HCT116 (cell line): ENCODE measurements at regions of chr17 and their contacts with region 1.

Region 1: DNA sequence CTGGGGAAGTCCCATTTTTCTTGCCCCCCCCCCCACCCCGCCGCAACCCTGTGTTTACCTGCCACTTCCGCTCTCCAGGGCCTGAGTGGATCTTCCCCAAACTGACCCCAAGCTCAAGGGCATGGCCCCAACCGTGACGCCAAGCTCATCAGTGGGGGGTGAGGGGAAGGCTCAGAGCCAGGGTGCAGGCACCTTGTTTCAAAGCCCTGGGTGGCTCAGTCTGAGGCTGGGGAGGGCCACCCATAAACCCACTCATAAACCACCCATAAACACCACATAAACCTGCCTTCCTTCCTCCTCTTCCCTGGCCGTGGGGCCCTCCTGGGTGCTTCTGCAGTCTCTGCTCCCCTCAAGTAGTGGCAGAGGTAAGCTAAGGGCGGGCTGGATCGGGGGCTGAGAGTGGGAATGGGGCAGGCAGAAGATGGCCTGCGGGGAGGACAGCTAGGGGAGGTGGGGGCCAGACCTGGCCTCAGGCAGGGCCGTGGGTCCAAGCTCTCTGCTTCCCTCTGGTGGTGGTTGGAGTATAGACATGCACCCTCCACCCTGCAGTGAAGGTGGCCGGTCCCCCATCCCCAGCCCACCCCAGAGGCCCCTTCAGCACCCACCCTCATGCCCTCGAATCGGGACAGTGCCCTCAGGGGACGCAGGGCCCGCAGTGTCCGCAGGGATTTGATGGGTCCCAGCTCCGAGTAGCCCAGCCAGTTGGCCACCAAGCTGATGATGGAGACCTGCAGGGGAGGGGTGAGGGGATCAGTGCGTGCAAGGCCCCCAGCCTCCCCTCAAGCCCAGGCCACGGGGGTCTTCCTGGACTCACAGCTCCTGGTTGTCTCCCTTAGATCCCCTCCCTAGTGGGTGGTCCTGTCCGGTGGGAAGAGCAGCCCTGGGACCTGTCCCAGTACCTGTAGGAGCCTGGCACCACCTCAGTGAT is 14.6 kb upstream of the CD79B start:
- DNase-seq: peak; percentile 22
- ATAC-seq: peak; percentile 86
- H3K4me3 ChIP-seq: no peak overlapping the region
- H3K27ac ChIP-seq: no peak overlapping the region
- H3K4me1 ChIP-seq: peaks cover 0 to 10% of the 10 kb centered on the region in 2 experiments; a peak in 1 of 4 replicates
- H3K27me3 ChIP-seq: no peaks in the 10 kb centered on the region
- CTCF ChIP-seq: peak; percentile 58 to 83 (median 83)
- POLR2A ChIP-seq: no peak
- RAD21 ChIP-seq: no peak; the same call in 1 of the 2 replicates

Region 2: GRCh38 chr17:63827002-63827771 is 119.5 kb before region 1 on chr17 and contains the starts of genes FTSJ3 and PSMC5:
- CTCF ChIA-PET with region 1: no interaction called
- POLR2A ChIA-PET with region 1: no interaction called
- RAD21 ChIA-PET with region 1: no interaction called
- intact Hi-C with region 1: no loop called
- DNase-seq: peak; percentile 98
- ATAC-seq: peak; percentile 89
- H3K4me3 ChIP-seq: peak within 1 kb of the TSS; percentile 81 to 85
- H3K27ac ChIP-seq: peak within 1 kb of the TSS; percentile 81
- H3K4me1 ChIP-seq: peaks cover 8 to 16% of the 10 kb centered on the region in 2 experiments
- H3K27me3 ChIP-seq: no peaks in the 10 kb centered on the region
- CTCF ChIP-seq: peak in 2 of 3 experiments; percentile 35 to 53; a peak in 3 of 6 replicates
- POLR2A ChIP-seq: peak; percentile 89
- RAD21 ChIP-seq: no peak
- total RNA-seq, gene FTSJ3: 70.9 TPM
- total RNA-seq, gene PSMC5: 193 TPM

Region 3: GRCh38 chr17:63911657-63912426 is 34.9 kb before region 1 on chr17:
- CTCF ChIA-PET with region 1: interaction called, 11 read pairs
- POLR2A ChIA-PET with region 1: no interaction called
- RAD21 ChIA-PET with region 1: interaction called in 1 of 2 experiments, 4 read pairs
- intact Hi-C with region 1: no loop called
- DNase-seq: peak; percentile 16
- ATAC-seq: peak; percentile 86
- H3K4me3 ChIP-seq: no peak overlapping the region
- H3K27ac ChIP-seq: no peak overlapping the region
- H3K4me1 ChIP-seq: no peaks in the 10 kb centered on the region
- H3K27me3 ChIP-seq: no peaks in the 10 kb centered on the region; the same call in 1 of the 2 replicates
- CTCF ChIP-seq: peak; percentile 57 to 78 (median 59); a peak in 4 of 6 replicates
- POLR2A ChIP-seq: no peak
- RAD21 ChIP-seq: peak; percentile 62

Region 4: DNA sequence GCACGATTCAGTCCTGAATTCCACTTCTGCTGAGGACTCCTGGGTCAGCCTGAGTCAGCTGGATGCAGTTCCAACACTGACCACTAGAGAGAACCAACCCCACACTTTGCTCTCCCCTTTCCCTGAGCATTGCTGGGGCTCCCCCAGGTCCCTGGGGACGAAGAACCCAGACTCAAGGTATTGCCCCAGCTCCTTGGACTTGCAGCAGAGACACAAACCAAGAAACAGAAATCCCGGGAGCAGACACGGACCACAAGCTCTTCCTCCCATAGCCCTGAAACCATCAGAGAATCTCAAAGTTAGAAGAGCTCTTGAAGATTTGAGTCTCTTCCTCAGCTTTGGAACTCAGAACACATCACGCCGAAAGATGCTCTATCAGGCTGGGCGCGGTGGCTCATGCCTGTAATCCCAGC is 27.4 kb before region 1 on chr17:
- CTCF ChIA-PET with region 1: interaction called, 69 read pairs
- POLR2A ChIA-PET with region 1: interaction called, 6 read pairs
- RAD21 ChIA-PET with region 1: interaction called, 9 to 20 read pairs
- intact Hi-C with region 1: loop called (anchors 1 kb)
- DNase-seq: peak; percentile 59
- ATAC-seq: peak; percentile 98
- H3K4me3 ChIP-seq: no peak overlapping the region
- H3K27ac ChIP-seq: no peak overlapping the region
- H3K4me1 ChIP-seq: no peaks in the 10 kb centered on the region
- H3K27me3 ChIP-seq: no peaks in the 10 kb centered on the region
- CTCF ChIP-seq: peak; percentile 96 to 98 (median 98)
- POLR2A ChIP-seq: no peak
- RAD21 ChIP-seq: peak; percentile 97

Region 5: DNA sequence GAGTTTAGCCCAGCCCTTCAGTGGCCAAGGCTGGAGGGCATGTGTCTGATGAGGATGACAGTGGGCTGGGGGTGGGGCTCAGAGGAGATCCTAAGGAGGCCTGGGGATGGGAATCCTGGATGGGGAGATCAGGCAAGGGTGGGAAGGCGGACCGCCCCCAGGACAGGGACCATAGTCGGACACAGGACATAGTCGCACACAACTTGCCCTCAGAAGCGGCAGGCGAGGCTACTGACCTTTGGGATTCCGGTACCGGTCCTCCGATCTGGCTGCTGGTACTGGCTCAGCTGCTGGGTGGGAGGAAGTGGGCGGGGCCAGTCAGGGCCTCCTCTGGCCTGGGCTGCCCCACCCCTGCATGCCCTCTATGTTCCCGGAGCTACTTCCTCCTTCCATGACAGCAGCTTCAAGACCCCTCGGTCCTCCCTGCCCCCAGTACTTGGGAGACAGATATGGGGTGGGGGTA is 15.6 kb before region 1 on chr17:
- CTCF ChIA-PET with region 1: interaction called, 17 read pairs
- POLR2A ChIA-PET with region 1: no interaction called
- RAD21 ChIA-PET with region 1: no interaction called
- intact Hi-C with region 1: no loop called
- DNase-seq: no peak
- ATAC-seq: peak; percentile 68
- H3K4me3 ChIP-seq: no peak overlapping the region
- H3K27ac ChIP-seq: no peak overlapping the region
- H3K4me1 ChIP-seq: peaks cover 0 to 11% of the 10 kb centered on the region in 2 experiments; a peak in 3 of 4 replicates
- H3K27me3 ChIP-seq: no peaks in the 10 kb centered on the region
- CTCF ChIP-seq: no peak
- POLR2A ChIP-seq: no peak
- RAD21 ChIP-seq: no peak

Region 6: GRCh38 chr17:63961355-63962212 is 14.9 kb after region 1 on chr17:
- CTCF ChIA-PET with region 1: interaction called, 29 read pairs
- POLR2A ChIA-PET with region 1: interaction called, 6 read pairs
- RAD21 ChIA-PET with region 1: no interaction called
- intact Hi-C with region 1: no loop called
- DNase-seq: peak; percentile 92
- ATAC-seq: peak; percentile 92
- H3K4me3 ChIP-seq: peak overlapping the region; percentile 14 to 20
- H3K27ac ChIP-seq: no peak overlapping the region; the same call in 1 of the 2 replicates
- H3K4me1 ChIP-seq: peaks cover 4 to 16% of the 10 kb centered on the region in 2 experiments; a peak in 3 of 4 replicates
- H3K27me3 ChIP-seq: no peaks in the 10 kb centered on the region
- CTCF ChIP-seq: no peak
- POLR2A ChIP-seq: no peak
- RAD21 ChIP-seq: no peak

Region 7: DNA sequence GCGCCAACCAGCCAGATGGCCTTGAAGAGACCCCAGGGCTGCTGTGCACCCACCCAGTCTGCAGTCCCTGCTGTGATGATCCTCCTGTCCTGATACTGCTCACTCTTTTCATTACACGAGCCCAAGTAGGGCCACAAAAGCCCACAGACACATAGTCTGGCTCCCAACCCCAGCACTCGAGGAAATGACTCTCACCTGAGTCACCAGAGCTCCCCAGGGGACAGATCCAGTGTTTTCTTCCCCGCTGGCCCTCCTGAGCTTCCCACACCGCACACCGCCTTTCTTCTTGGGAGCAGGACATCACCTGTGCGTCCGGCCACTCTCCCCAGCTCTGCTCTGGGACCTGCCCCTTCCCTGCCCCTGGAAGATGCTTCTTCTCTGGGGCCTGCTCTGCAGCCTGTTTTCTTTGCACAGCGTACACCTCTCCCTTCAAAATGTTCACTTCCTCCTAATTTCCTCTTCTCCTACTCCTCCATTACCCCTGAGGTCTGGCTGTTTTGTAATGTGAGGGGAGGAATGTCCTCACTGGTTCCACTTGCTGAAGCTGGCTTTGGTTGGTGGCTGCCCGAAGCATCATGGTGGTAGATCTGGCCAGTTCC is 28.0 kb after region 1 on chr17:
- CTCF ChIA-PET with region 1: interaction called, 10 read pairs
- POLR2A ChIA-PET with region 1: no interaction called
- RAD21 ChIA-PET with region 1: interaction called in 1 of 2 experiments, 5 read pairs
- intact Hi-C with region 1: no loop called
- DNase-seq: peak; percentile 57
- ATAC-seq: peak; percentile 84
- H3K4me3 ChIP-seq: peak overlapping the region; percentile 23 to 44
- H3K27ac ChIP-seq: peak overlapping the region; percentile 46
- H3K4me1 ChIP-seq: peaks cover 23 to 43% of the 10 kb centered on the region in 2 experiments
- H3K27me3 ChIP-seq: no peaks in the 10 kb centered on the region
- CTCF ChIP-seq: no peak
- POLR2A ChIP-seq: no peak
- RAD21 ChIP-seq: no peak

Region 8: DNA sequence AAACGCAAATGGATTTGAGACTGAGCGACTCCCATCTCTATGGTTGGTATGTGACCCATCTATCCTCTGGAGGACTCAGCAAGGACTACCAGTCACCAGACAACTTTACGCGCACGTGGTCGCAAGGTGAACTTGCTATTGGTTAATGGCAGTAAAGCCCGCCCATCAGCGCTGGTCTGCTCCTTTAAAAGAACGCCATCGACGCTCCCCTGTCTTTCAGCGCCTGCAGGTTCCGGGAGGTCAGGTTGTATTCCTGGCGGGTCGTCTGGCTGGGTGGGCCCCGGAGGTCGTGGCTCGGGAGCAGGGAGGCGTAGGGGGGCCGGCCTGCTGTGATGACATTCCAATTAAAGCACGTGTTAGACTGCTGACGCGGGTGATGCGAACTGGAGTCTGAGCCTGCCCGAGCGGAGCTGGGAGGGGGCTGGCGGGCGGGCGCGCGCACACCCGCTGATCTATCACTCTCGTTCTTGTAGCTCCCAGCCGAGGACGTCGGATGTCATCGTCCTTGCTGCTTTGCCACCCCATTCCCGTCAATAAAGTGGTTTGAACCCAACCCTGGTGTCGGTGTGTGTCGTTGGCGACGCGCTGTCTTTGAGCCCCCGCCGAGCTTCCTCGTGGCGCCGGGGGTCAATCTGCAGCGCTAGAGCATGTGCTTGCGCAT is 199.2 kb after region 1 on chr17:
- CTCF ChIA-PET with region 1: no interaction called
- POLR2A ChIA-PET with region 1: no interaction called
- RAD21 ChIA-PET with region 1: no interaction called
- intact Hi-C with region 1: no loop called
- DNase-seq: peak; percentile 100
- ATAC-seq: peak; percentile 88
- H3K4me3 ChIP-seq: peak overlapping the region; percentile 74 to 88
- H3K27ac ChIP-seq: peak overlapping the region; percentile 95
- H3K4me1 ChIP-seq: peaks cover 6 to 29% of the 10 kb centered on the region in 2 experiments; a peak in 3 of 4 replicates
- H3K27me3 ChIP-seq: no peaks in the 10 kb centered on the region
- CTCF ChIP-seq: no peak
- POLR2A ChIP-seq: peak; percentile 100
- RAD21 ChIP-seq: no peak